Activated B cell treated with CpG ODN at 0.5 μM for 24 hours (primary cell): ENCODE measurements at regions of chr19 and their contacts with region 1.

Region 1: GRCh38 chr19:36850559-36851442 is at the start of gene ZNF345:
- DNase-seq: peak; percentile 71
- ATAC-seq: peak; percentile 83
- H3K4me3 Mint-ChIP-seq: no peak within 1 kb of the TSS
- H3K27ac Mint-ChIP-seq: no peak within 1 kb of the TSS
- H3K4me1 Mint-ChIP-seq: peaks cover 9% of the 10 kb centered on the region
- H3K27me3 Mint-ChIP-seq: no peaks in the 10 kb centered on the region
- CTCF ChIP-seq: no peak
- total RNA-seq, gene ZNF345: 7.8 and 9.5 TPM in 2 replicates

Region 2: DNA sequence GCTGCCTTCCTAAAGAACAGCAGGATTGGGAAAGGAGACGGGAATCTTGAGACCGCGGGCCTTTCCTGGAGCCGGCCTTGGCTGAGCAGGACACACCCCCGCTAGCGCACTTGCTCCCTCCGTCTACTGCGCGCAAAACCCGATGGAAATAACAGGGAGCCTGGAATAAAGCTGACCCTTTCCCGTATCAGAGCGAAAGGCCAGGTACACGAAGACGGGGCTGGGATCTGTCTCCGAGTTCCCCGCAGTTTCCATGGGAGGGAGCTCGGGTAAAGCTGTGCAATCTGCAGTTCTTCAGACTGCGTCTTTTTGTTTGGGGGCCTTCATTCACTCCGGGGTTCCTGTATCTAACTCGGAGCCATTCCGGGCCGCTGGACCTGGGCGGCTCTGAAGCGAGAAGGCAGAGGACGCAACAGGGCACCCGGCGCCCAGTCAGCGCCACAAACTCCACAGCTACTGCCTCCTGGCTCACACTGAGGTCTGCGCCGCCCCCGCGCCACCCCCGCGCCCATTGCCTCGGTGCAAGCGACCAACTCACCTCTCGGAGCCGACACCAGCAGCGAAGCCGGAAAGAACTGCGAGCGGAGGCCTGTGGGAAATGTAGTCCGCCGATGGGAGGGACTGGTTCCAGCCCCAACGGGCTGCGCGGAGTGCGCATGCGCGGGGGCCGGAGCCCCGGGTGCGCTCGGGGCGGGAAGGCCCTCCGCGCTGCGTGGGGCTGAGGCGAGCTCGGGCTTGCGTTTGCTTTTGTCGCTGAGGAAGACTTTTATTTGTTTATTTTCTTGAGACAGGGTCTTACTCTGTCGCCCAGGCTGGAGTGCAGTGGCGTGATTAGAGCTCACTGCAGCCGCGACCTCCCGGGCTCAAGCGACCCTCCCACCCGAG is 471.9 kb before region 1 on chr19 and contains the start of gene ZFP14:
- CTCF ChIA-PET with region 1: no interaction called
- POLR2A ChIA-PET with region 1: interaction called, 9 read pairs
- intact Hi-C with region 1: loop called (anchors 1 kb)
- DNase-seq: peak; percentile 92
- ATAC-seq: peak; percentile 99
- H3K4me3 Mint-ChIP-seq: peak within 1 kb of the TSS; percentile 94
- H3K27ac Mint-ChIP-seq: peak within 1 kb of the TSS; percentile 96
- H3K4me1 Mint-ChIP-seq: peaks cover 21% of the 10 kb centered on the region
- H3K27me3 Mint-ChIP-seq: no peaks in the 10 kb centered on the region
- CTCF ChIP-seq: no peak
- total RNA-seq, gene ZFP14: 7.7 and 10.4 TPM in 2 replicates

Region 3: GRCh38 chr19:36573020-36573885 is 277.5 kb before region 1 on chr19 and contains the start of gene ZNF529:
- CTCF ChIA-PET with region 1: no interaction called
- POLR2A ChIA-PET with region 1: interaction called, 11 read pairs
- intact Hi-C with region 1: loop called (anchors 2 kb)
- DNase-seq: peak; percentile 79
- ATAC-seq: peak; percentile 91
- H3K4me3 Mint-ChIP-seq: peak within 1 kb of the TSS; percentile 89
- H3K27ac Mint-ChIP-seq: peak within 1 kb of the TSS; percentile 86
- H3K4me1 Mint-ChIP-seq: peaks cover 33% of the 10 kb centered on the region
- H3K27me3 Mint-ChIP-seq: no peaks in the 10 kb centered on the region
- CTCF ChIP-seq: no peak
- total RNA-seq, gene ZNF529: 21.9 and 23.6 TPM in 2 replicates

Region 4: DNA sequence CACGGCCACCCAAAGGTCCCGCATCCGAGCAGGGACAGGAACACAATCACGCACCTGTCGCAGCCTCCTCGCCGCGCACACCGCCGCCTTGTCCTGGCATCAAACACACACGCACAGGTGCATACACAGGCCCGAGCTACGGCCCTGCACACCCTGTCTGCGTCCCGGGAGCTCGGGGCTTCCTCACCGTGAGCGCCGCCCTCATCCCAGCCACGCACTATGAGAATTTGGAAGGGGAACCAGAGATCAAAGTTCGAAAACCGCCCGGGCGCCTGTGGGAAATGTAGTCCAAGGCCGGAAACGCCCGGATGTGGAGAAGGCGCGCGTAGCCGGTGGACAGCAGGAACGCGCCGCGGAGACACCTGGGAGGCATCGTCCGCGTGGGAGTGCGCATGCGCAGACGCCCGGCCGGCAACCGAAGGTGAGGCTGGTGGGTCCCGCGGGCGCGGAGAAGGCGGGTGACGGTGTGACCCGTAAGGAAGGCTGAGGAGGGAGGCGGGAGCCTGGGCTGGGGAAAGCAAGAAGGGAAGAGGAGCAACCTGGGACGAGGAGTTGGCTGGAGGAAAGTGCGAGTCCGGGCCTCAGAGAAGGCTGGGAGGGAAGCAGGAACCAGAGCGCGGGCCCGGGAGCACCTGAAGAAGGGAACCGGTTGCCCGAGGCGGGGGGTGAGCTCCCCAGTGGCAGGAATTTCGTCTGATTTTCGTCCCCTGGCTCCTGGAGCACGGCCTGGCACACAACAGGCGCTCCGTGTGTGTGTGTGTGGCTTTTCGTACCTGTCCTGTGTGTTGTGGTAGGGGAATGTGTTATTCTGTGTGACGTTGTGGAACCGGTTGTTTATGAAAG is 163.4 kb before region 1 on chr19 and contains the start of gene ZNF567:
- CTCF ChIA-PET with region 1: no interaction called
- POLR2A ChIA-PET with region 1: interaction called, 5 read pairs
- intact Hi-C with region 1: loop called (anchors 5 kb)
- DNase-seq: peak; percentile 95
- ATAC-seq: peak; percentile 93
- H3K4me3 Mint-ChIP-seq: peak within 1 kb of the TSS; percentile 98
- H3K27ac Mint-ChIP-seq: peak within 1 kb of the TSS; percentile 89
- H3K4me1 Mint-ChIP-seq: peaks cover 34% of the 10 kb centered on the region
- H3K27me3 Mint-ChIP-seq: no peaks in the 10 kb centered on the region
- CTCF ChIP-seq: no peak
- total RNA-seq, gene ZNF567: 13.3 and 15.0 TPM in 2 replicates

Region 5: DNA sequence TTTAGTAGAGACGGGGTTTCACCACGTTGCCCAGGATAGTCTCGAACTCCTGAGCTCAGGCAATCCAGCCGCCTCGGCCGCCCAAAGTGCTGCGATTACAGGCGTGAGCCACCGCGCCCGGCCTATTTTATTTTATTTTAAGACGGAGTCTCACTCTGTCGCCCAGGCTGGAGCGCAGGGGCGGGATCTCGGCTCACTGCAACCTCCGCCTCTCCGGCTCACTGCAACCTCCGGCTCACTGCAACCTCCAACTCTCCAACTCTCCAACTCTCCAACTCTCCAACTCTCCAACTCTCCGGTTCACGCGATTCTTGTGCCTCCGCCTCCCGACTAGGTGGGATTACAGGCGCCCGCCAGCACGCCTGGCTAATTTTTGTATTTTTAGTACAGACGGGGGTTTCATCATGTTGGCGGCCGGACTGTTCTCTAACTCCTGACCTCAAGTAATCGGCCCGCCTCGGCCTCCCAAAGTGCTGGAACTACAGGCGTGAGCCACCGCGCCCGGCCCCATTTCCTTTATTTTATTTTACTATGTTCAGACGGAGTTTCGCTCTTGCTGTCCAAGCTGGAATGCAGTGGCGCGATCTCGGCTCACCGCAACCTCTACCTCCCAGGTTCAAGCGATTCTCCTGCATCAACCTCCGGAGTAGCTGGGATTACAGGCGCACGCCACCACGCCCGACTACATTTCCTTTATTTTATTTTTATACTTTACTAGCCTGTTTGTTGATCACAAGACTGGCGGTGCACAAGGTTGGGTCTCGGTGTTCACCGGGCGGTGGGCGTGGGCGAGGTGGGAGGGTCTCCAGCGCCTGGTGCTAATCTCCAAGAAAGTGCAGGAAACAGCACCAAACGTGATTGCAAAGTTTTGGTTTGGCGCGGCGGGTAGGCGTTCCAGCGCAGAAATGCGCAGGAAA is 54.5 kb before region 1 on chr19:
- CTCF ChIA-PET with region 1: no interaction called
- POLR2A ChIA-PET with region 1: interaction called, 11 read pairs
- intact Hi-C with region 1: loop called (anchors 1 kb)
- DNase-seq: no peak
- ATAC-seq: no peak
- H3K4me3 Mint-ChIP-seq: peak overlapping the region; percentile 96
- H3K27ac Mint-ChIP-seq: peak overlapping the region; percentile 99
- H3K4me1 Mint-ChIP-seq: peaks cover 24% of the 10 kb centered on the region
- H3K27me3 Mint-ChIP-seq: peaks cover 4% of the 10 kb centered on the region
- CTCF ChIP-seq: no peak

Region 6: GRCh38 chr19:36915992-36916830 is 65.4 kb after region 1 on chr19 and contains the starts of genes ZNF568 and ZNF829:
- CTCF ChIA-PET with region 1: no interaction called
- POLR2A ChIA-PET with region 1: interaction called, 8 read pairs
- intact Hi-C with region 1: loop called (anchors 1 kb)
- DNase-seq: peak; percentile 87
- ATAC-seq: peak; percentile 93
- H3K4me3 Mint-ChIP-seq: peak within 1 kb of the TSS; percentile 91
- H3K27ac Mint-ChIP-seq: peak within 1 kb of the TSS; percentile 91
- H3K4me1 Mint-ChIP-seq: peaks cover 26% of the 10 kb centered on the region
- H3K27me3 Mint-ChIP-seq: no peaks in the 10 kb centered on the region
- CTCF ChIP-seq: no peak
- total RNA-seq, gene ZNF568: 12.0 and 13.4 TPM in 2 replicates
- total RNA-seq, gene ZNF829: 7.3 and 7.6 TPM in 2 replicates

Region 7: GRCh38 chr19:37160153-37160552 is 309.4 kb after region 1 on chr19:
- CTCF ChIA-PET with region 1: no interaction called
- POLR2A ChIA-PET with region 1: no interaction called
- intact Hi-C with region 1: no loop called
- DNase-seq: no peak
- ATAC-seq: no peak
- H3K4me3 Mint-ChIP-seq: no peak overlapping the region
- H3K27ac Mint-ChIP-seq: no peak overlapping the region
- H3K4me1 Mint-ChIP-seq: no peaks in the 10 kb centered on the region
- H3K27me3 Mint-ChIP-seq: no peaks in the 10 kb centered on the region
- CTCF ChIP-seq: no peak

Region 8: GRCh38 chr19:37217855-37218591 is 367.2 kb after region 1 on chr19 and contains the start of gene ZNF383:
- CTCF ChIA-PET with region 1: no interaction called
- POLR2A ChIA-PET with region 1: interaction called, 5 read pairs
- intact Hi-C with region 1: loop called (anchors 2 kb)
- DNase-seq: peak; percentile 81
- ATAC-seq: peak; percentile 89
- H3K4me3 Mint-ChIP-seq: peak within 1 kb of the TSS; percentile 98
- H3K27ac Mint-ChIP-seq: peak within 1 kb of the TSS; percentile 99
- H3K4me1 Mint-ChIP-seq: peaks cover 26% of the 10 kb centered on the region
- H3K27me3 Mint-ChIP-seq: no peaks in the 10 kb centered on the region
- CTCF ChIP-seq: no peak
- total RNA-seq, gene ZNF383: 19.9 and 25.5 TPM in 2 replicates